ENCODE measurements at regions of chr2 and their contacts with region 1.

Region 1: DNA sequence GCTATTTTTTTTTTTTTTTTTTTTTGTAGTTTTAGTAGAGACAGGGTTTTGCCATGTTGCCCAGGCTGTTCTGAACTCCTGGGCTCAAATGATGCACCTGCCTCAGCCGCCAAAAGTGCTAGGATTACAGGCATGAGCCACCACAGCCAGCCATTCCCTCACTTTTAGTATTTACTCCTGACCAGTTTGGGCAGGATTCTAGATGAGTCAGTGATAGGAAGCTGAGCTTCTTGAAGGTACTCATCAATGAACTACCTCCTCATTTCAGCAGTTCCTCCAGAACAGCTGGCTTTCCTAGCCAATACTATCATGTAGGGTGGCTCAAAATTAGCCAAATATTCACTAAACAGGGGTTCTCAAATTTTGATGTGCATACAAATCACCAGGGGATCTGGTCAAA is 57.2 kb downstream of the CYBRD1 start:
- DNase-seq: no peak
- H3K4me3 ChIP-seq: no peak overlapping the region
- H3K27ac ChIP-seq: no peak overlapping the region
- H3K4me1 ChIP-seq: no peaks in the 10 kb centered on the region
- H3K27me3 ChIP-seq: no peaks in the 10 kb centered on the region
- CTCF ChIP-seq: no peak

Region 2: GRCh38 chr2:171547720-171548119 is 31.8 kb before region 1 on chr2:
- CTCF ChIA-PET with region 1: no interaction called
- POLR2A ChIA-PET with region 1: interaction called, 10 read pairs
- intact Hi-C with region 1: no loop called
- DNase-seq: no peak
- H3K4me3 ChIP-seq: no peak overlapping the region
- H3K27ac ChIP-seq: no peak overlapping the region
- H3K4me1 ChIP-seq: no peaks in the 10 kb centered on the region
- H3K27me3 ChIP-seq: no peaks in the 10 kb centered on the region
- CTCF ChIP-seq: no peak

Measured in A673 (cell line).